MCF 10A (cell line): ENCODE measurements at regions of chr3 and their contacts with region 1.

Region 1: DNA sequence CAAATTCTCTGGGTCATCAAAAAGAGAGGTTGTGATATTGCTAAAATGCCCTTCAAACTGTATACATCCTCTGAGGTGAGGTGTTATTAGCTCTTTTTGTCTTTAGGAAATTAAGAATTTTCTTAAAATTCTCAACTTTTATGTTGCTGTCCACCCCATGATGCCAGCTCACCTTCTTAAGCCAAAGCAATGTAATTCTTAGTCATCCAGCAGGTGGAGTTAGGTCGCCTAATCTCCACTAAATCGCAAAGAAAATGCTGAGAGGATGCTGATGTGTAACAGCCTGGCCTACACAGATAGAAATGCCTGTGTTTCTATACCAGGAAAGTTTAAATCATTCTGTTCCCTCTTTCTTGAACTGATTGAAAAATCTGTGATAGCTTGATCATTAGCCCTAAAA is 770.2 kb upstream of the ALCAM start:
- DNase-seq: peak; percentile 66
- H3K4me3 Mint-ChIP-seq: no peak overlapping the region
- H3K27ac Mint-ChIP-seq: no peak overlapping the region
- H3K4me1 Mint-ChIP-seq: no peaks in the 10 kb centered on the region
- H3K27me3 Mint-ChIP-seq: no peaks in the 10 kb centered on the region
- CTCF ChIP-seq: peak; percentile 59

Region 2: GRCh38 chr3:104273046-104273649 is 323.4 kb before region 1 on chr3:
- CTCF ChIA-PET with region 1: interaction called, 7 read pairs
- POLR2A ChIA-PET with region 1: no interaction called
- intact Hi-C with region 1: loop called (anchors 10 kb)
- DNase-seq: peak; percentile 40
- H3K4me3 Mint-ChIP-seq: no peak overlapping the region
- H3K27ac Mint-ChIP-seq: no peak overlapping the region
- H3K4me1 Mint-ChIP-seq: no peaks in the 10 kb centered on the region
- H3K27me3 Mint-ChIP-seq: no peaks in the 10 kb centered on the region
- CTCF ChIP-seq: peak; percentile 50

Region 3: DNA sequence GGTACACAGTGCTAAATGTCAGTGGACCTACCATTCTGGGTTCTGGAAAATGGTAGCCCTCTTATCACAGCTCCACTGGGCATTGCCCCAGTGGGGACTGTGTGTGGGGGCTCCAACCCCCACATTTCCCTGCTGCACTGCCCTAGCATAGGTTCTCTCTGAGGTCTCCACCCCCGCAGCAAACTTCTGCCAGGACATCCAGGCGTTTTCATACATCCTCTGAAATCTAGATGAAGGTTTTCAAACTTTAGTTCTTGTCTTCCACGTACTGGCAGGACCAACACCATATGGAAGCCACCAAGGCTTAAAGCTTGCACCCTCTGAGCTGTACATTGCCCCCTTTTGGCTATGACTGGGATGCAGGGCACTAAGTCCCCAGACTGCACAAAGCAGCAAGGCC is 18.0 kb before region 1 on chr3:
- CTCF ChIA-PET with region 1: interaction called, 13 read pairs
- POLR2A ChIA-PET with region 1: interaction called, 3 read pairs
- intact Hi-C with region 1: no loop called
- DNase-seq: no peak
- H3K4me3 Mint-ChIP-seq: no peak overlapping the region
- H3K27ac Mint-ChIP-seq: no peak overlapping the region
- H3K4me1 Mint-ChIP-seq: no peaks in the 10 kb centered on the region
- H3K27me3 Mint-ChIP-seq: no peaks in the 10 kb centered on the region
- CTCF ChIP-seq: no peak

Region 4: GRCh38 chr3:105518806-105519418 is 922.4 kb after region 1 on chr3:
- CTCF ChIA-PET with region 1: interaction called, 31 read pairs
- POLR2A ChIA-PET with region 1: no interaction called
- intact Hi-C with region 1: loop called (anchors 1 kb)
- DNase-seq: peak; percentile 74
- H3K4me3 Mint-ChIP-seq: no peak overlapping the region
- H3K27ac Mint-ChIP-seq: no peak overlapping the region
- H3K4me1 Mint-ChIP-seq: no peaks in the 10 kb centered on the region
- H3K27me3 Mint-ChIP-seq: no peaks in the 10 kb centered on the region
- CTCF ChIP-seq: peak; percentile 60